ENCODE measurements at regions of chr9 and their contacts with region 1.

Region 1: DNA sequence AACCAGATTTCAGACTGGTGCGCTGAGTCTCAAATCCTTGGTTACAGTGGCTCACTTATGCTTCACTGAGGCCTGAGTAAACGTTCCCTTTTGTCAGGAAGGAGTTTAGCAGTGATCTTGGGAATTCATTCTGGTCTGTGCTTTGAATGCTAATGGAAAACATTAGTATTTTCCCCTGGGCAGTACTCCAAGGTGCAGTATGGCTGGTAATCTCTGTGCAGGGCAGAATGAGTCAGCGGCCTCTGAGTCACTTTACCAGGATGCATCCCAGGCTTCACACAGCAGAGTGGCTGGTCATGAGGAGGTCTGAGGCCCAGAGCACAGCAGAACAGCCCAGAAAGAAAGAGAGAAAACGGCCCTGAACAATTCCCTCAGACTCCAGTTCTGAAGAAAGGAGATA is 54.0 kb downstream of the PCA3 start:
- DNase-seq: peak; percentile 87 to 94
- H3K4me3 ChIP-seq: no peak overlapping the region
- H3K27ac ChIP-seq: peak overlapping the region; percentile 66 to 79
- H3K4me1 ChIP-seq: peaks cover 0 to 41% (median 19%) of the 10 kb centered on the region in 4 donors
- H3K27me3 ChIP-seq: no peaks in the 10 kb centered on the region
- CTCF ChIP-seq: no peak

Region 2: DNA sequence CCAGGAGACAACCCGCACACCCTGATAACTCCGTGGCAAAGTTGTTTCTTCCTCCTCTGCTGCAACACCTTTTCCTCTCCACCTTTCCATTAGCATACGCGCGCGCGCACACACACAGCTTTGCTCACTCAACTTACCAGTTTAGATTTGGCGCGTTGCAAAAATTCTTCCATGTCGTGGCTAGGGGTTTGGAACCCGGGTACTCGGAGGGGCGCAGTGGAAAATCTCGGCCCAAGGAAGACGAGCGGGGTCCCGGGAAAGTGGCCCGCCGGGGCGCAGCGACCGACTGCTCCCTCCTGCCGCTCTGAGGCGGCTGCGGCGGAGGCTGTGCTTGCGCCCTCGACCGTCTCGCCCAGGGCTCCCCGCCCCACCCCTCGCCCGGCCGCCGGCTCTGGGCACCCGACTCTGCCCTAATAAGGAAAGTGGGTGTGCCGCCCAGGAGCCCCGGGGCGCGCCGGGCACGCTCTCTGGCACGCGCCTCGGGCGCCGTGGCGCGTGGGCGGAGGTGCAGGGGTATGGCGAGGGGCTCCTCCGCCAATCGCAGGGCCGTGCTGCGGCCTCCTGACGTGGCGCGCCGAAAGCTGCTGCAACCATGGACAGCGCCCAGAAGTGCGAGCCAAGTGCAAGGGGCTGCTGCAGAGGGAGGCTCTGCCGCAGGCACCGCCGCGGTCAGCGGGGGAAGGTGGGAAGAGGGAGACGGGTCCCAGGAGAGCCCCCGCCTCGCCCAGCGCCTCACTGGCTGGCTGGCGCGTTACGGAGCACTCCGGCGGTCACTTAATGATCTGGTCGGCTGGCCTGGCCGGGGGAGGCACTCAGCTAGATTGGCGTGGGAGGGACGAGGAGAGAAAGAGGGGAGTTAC is 87.8 kb after region 1 on chr9 and contains the start of gene PRUNE2:
- intact Hi-C with region 1: loop called (anchors 5 kb)
- DNase-seq: peak; percentile 64 to 93
- H3K4me3 ChIP-seq: peak within 1 kb of the TSS; percentile 71 to 83
- H3K27ac ChIP-seq: peak within 1 kb of the TSS; percentile 74 to 86
- H3K4me1 ChIP-seq: peaks cover 0 to 42% (median 19%) of the 10 kb centered on the region in 4 donors
- H3K27me3 ChIP-seq: no peaks in the 10 kb centered on the region
- CTCF ChIP-seq: peak in 1 of 2 experiments; percentile 18

Region 3: DNA sequence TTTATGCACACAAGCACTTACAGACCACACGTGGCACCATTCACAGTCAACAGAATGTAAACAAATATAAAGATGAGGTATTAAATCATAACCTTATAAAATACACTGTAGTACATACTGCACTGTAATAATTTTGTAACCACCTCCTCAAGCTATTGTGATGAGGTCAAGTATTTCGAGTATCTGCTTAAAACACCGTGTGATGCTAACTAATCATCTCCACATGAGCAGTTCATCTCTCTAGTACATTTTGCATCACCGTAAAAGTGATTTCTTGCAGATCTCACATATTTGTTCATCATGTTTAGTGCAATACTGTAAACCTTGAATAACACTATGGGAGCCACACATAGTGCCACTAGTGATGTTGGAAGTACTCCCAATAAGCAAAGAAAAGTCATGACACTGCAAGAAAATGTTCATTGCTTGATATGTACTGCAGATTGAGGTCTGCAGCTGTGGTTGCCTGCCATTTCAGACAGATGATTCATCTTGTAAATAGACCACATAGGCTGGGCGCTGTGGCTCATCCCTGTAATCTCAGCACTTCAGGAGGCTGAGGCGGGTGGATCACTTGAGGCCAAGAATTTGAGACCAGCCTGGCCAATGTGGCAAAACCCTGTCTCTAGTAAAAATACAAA is 245.5 kb after region 1 on chr9:
- intact Hi-C with region 1: no loop called
- DNase-seq: no peak
- H3K4me3 ChIP-seq: no peak overlapping the region
- H3K27ac ChIP-seq: no peak overlapping the region
- H3K4me1 ChIP-seq: no peaks in the 10 kb centered on the region
- H3K27me3 ChIP-seq: no peaks in the 10 kb centered on the region
- CTCF ChIP-seq: no peak

Measured in tibial artery (tissue), 4 donors.